ENCODE measurements at regions of chr17 and their contacts with region 1.

Region 1: DNA sequence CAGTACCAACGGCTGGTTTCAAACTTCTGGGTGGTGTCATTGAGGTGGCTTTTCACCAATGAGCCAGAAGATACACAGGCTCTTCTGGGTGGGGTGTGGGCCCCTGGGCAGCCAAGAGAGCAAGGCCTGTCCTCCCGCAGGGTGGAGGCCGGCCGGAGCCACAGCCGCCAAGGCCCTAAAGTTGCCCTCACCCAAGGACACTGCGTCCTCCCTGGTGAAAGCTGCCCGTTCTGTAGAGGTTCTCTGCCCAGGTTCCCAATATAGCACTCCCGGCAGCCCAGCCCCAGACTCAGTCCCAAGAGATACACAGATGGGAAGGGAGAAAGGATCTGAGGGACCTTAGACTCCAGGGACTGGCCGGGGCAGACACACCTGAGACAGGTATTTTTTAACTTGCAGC is 10.7 kb upstream of the CACNG1 start:
- DNase-seq: no peak
- ATAC-seq: no peak
- H3K4me3 ChIP-seq: no peak overlapping the region
- H3K27ac ChIP-seq: no peak overlapping the region
- H3K4me1 ChIP-seq: no peaks in the 10 kb centered on the region
- H3K27me3 ChIP-seq: peaks cover 10 to 38% of the 10 kb centered on the region in 2 experiments; a peak in 3 of 5 replicates
- CTCF ChIP-seq: no peak
- EP300 ChIP-seq: no peak
- POLR2A ChIP-seq: no peak
- RAD21 ChIP-seq: no peak

Region 2: DNA sequence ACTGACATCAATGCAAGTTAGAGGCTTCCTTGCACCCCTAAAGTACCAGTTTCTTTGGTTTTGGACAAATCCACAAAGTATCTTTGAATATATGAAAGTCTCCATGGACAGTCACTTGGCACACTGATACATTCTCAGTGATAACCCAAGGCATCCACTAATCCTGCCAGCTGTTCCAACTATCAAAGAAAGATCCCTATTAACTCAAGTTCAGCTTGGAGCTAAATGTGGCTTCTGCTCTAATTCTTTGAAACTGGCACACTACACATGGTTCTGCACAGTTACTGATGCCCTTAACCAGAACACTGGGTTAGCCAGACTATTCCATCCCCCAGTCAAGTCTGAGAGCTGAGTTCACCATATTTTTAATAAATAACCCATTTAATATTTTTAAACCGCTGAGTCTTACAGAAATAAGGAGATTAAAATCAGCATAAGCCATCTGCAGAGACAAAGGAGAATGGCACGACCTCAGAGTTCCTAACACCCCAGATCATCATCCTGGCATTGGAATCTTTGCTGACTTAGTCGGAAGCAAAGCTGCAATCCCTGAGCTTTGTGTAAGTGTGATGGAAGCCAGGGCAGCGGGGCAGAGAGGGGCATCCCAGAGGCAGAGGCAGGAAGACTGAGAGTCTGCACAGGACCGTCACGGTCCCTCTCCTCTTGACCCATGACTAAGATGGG is 17.0 kb after region 1 on chr17:
- CTCF ChIA-PET with region 1: no interaction called
- POLR2A ChIA-PET with region 1: no interaction called
- in situ Hi-C with region 1: no loop called
- intact Hi-C with region 1: loop called (anchors 1 kb)
- DNase-seq: no peak
- ATAC-seq: no peak
- H3K4me3 ChIP-seq: no peak overlapping the region
- H3K27ac ChIP-seq: no peak overlapping the region
- H3K4me1 ChIP-seq: peaks cover 8% of the 10 kb centered on the region
- H3K27me3 ChIP-seq: peaks cover 5 to 33% of the 10 kb centered on the region in 2 experiments; a peak in 3 of 5 replicates
- CTCF ChIP-seq: no peak
- EP300 ChIP-seq: no peak
- POLR2A ChIP-seq: no peak
- RAD21 ChIP-seq: no peak

Region 3: GRCh38 chr17:67068999-67069398 is 35.4 kb after region 1 on chr17:
- CTCF ChIA-PET with region 1: no interaction called
- POLR2A ChIA-PET with region 1: no interaction called
- in situ Hi-C with region 1: no loop called
- intact Hi-C with region 1: no loop called
- DNase-seq: no peak
- ATAC-seq: no peak; the same call in 2 of the 3 replicates
- H3K4me3 ChIP-seq: no peak overlapping the region
- H3K27ac ChIP-seq: no peak overlapping the region
- H3K4me1 ChIP-seq: peaks cover under 1% of the 10 kb centered on the region; the same call in 1 of the 2 replicates
- H3K27me3 ChIP-seq: no peaks in the 10 kb centered on the region
- CTCF ChIP-seq: no peak
- EP300 ChIP-seq: no peak
- POLR2A ChIP-seq: no peak
- RAD21 ChIP-seq: no peak